Right ventricle myocardium inferior (tissue), 1 donor: ENCODE measurements at regions of chr16 and their contacts with region 1.

Region 1: DNA sequence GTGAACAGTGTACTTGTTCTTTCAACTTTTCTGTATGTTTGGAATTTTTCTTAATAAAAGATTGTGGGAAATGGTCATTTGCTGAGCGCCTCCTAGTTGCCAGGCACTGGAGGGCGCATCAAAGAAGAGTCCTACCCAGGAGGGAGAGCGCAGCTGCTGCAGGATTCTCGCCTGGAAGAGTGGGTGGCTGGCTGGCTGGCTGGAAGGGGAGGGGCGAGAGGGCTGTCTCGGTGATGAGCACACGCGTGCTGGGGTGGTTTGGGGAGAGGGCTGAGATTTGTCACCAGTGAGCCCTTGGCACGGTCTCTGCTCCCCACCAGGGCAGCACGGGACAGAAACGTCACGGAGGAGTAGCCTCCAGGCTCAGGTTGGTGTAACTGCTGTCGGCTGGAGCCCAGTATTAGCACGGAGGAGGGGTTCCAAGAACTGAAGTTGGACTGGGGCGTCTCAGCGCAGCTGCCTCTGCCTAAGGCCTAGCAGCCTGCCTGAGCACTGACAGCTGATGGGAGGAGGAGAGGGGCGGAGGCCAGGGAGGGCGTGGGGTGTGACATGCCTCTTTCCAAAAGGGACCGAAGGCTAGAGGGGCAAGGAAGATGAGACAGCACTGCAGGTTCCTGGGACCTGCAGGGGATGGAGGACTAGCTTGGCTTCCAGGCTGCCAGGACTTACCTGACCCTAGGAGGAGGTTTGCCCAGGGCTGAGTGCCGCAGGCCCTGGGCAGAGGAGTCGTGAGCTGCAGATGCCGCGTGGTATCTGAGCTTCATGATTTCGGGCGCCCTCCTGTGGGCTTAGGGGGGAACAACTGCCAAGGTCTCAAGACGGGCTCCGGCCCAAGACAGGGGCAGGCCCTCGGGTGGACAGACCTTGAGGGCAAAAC is 5.7 kb downstream of the LDHD start:
- DNase-seq: peak; percentile 93
- ATAC-seq: peak; percentile 70

Region 2: GRCh38 chr16:74709441-74709877 is 401.4 kb before region 1 on chr16:
- intact Hi-C with region 1: loop called (anchors 10 kb)
- DNase-seq: peak; percentile 79
- ATAC-seq: peak; percentile 83

Region 3: GRCh38 chr16:74813109-74813641 is 297.7 kb before region 1 on chr16:
- intact Hi-C with region 1: loop called (anchors 10 kb)
- DNase-seq: peak; percentile 81
- ATAC-seq: peak; percentile 92

Region 4: DNA sequence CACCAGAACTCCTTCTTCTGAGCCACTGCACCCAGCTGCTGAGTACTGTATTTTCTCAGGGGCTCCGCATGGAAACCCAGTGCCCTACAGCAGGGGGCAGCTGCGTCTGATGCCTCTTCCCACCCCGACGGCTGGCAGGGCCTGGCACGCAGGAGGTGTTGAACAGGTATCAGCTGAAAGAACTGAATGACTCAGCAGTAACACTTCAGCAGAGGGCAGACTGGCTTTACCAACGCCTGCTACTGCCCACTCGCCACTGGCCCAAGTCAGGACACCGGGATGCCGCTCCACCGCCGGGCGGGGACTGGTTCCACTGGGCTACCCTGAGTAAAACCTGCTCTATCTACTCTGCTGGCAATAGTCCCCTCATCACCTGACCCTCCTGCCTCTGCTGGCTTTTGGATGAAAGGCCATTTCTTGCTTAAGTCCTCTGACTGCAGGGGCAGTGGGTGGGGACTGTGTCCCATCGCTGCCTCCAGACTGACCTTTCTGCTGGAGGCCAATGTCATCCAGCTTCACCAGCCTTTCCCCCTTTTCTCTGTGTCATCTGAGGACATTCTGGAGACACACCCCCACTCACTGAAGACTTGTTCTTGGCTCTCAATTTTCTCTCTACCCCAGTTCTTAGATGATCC is 235.8 kb before region 1 on chr16:
- intact Hi-C with region 1: loop called (anchors 5 kb)
- DNase-seq: no peak
- ATAC-seq: peak; percentile 67

Region 5: DNA sequence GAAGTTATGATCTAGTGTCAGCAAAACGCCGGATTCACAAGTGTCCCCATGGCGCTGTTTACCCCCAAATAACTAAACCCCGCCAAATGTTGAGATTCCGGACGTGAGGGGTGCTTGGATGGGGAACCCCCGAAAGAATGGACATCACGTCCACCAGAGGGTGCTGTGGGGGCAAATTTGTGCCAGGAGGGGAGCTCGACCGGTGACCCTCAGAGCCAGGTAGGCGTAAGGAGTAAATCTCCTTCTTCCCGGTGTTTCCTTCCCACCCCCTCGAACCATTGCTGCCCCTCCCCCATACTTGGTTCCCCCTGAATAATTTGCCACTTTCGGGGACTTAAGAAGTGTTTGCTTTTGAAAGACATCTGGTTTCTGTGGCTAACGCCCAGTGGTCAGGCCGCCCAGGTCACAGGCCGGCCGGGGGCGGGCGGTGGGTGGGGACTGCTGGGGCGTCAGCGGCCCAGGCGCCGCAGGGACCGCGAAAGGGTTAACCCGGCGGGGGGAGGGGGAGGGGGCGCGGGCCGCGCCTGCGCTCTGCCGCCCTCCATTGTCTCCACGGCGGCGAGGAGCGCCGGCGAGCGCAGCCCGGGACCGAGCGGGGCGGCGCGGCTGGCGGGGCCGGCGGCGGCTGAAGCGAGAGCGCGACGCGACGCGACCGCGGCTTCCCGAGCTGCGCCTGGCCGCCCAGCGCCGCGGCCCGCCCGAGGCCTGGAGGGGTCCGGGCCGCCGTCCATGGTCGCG is 112.2 kb before region 1 on chr16 and contains the start of gene ZNRF1:
- intact Hi-C with region 1: loop called (anchors 1 kb)
- DNase-seq: peak; percentile 89
- ATAC-seq: peak; percentile 86
- total RNA-seq, gene ZNRF1: 27.2 TPM

Region 6: GRCh38 chr16:75044800-75045430 is 66.0 kb before region 1 on chr16:
- intact Hi-C with region 1: loop called (anchors 2 kb)
- DNase-seq: no peak
- ATAC-seq: peak; percentile 70

Region 7: DNA sequence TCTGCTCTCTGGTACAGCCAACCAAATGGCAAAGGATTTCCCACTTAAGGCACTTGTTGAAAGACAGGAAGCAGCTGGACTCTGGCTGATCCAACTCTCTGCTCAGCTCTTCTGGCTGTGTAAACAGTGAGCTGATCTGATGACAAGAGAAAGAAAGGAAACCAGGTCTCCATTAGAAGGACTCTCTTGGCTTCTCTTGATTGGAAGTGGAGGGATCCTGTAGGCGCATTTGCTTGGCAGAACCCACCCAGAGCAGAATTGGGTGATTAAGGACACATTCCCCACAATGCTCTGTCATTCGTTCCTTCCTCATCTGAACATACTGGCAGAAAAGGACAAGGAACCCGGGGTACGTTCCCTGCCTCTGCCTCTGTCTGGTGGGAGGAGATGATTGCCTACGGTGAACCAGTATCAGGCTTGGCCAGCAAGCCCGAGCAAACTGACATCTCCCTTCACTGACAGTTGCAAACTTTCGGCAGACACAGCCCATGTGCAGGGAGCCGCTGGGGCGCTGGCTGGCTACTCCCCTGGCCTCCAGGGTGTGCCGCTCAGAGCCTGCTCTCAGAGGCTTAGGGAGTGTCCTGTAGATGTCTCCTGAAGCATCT is 23.4 kb before region 1 on chr16:
- intact Hi-C with region 1: loop called (anchors 1 kb)
- DNase-seq: no peak
- ATAC-seq: peak; percentile 95